ENCODE measurements at regions of chr20 and their contacts with region 1.

Region 1: DNA sequence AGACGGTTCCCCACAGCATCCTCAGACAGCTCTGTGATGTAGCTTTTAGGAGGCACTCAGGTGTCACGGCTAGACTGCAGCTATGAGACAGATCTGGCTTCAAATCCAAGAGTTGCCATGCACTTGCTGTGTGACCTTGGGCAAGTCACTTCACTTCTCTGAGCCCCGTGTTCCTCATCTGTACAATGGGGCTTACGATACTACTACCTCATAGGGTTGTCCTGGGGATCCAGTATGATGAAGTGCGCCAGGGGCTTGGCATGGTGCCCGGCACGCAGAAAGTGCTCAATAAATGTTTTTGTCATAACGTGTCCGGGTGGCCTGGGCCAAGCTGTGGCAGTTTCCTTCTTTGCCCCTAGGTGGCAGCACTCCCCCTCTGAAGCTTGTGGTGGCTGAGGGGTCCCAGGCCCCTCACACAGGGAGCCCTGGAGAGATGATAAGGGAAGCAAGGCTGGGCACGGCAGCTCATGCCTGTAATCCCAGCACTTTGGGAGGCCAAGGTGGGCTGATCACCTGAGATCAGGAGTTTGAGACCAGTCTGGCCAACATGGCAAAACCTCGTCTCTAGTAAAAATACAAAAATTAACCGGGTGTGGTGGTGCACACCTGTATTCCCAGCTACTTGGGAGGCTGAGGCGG is 19.1 kb upstream of the CHMP4B start:
- DNase-seq: peak in 1 of 2 experiments; percentile 57
- H3K4me3 ChIP-seq: no peak overlapping the region
- H3K27ac ChIP-seq: no peak overlapping the region; the same call in 1 of the 2 replicates
- H3K4me1 ChIP-seq: peaks cover 76% of the 10 kb centered on the region
- H3K27me3 ChIP-seq: no peaks in the 10 kb centered on the region
- CTCF ChIP-seq: peak; percentile 99

Region 2: DNA sequence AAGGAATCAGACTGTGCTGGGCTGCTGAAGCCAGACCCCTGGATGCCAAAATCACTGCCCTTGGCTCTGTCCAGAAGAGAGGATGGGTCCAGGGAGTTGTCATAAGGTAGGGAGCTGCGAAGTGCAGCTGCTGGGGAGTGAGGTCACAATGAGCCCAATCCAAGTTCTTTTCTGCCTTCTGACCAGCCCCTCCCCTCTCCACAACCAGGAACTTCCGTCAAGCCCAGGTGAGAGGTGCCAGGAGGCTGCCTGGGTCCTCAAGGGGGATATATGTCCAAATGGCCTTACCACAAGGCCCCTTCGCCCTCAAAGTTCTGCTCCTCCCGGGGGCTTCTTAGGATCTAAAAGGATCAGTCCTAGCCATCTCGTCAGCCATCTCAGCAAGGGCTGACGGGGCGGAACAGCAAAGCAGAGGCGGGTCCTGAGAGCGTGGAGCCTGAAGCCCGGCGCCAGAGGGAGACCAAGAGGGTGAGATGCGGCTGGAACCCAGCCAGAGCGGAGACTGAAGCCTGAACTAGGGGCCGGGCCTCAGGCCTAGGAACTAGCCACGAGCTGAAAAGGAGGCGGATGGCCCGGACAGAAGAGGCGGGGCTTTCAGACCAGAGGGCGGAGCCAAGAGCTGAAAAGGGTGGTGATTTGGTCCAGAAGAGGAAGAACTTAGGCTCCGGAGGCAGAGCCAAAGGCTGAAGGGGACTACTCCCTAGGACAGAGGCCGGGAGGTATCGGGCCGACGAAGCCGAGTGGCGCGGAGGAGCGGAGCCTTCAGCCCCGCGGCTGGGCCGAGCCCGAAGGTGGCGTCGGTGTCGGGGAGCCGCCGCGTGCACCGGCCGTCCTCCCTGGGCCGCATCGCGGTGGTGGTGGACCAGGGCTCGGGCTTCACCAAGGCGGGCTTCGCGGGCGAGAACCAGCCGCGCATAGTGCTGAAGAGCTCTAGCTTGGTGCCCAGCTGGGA is 125.5 kb before region 1 on chr20 and contains the start of gene ACTL10:
- CTCF ChIA-PET with region 1: no interaction called
- POLR2A ChIA-PET with region 1: no interaction called
- intact Hi-C with region 1: loop called (anchors 1 kb)
- DNase-seq: peak; percentile 94 to 98
- H3K4me3 ChIP-seq: peak within 1 kb of the TSS; percentile 62
- H3K27ac ChIP-seq: peak within 1 kb of the TSS; percentile 63
- H3K4me1 ChIP-seq: peaks cover 37% of the 10 kb centered on the region; the same call in 1 of the 2 replicates
- H3K27me3 ChIP-seq: no peaks in the 10 kb centered on the region
- CTCF ChIP-seq: no peak; the same call in 1 of the 2 replicates
- total RNA-seq, gene ACTL10: 0.85 and 1.0 TPM in 2 replicates

Region 3: GRCh38 chr20:33773412-33774089 is 18.5 kb before region 1 on chr20:
- CTCF ChIA-PET with region 1: no interaction called
- POLR2A ChIA-PET with region 1: interaction called, 44 read pairs
- intact Hi-C with region 1: loop called (anchors 1 kb)
- DNase-seq: no peak
- H3K4me3 ChIP-seq: no peak overlapping the region
- H3K27ac ChIP-seq: no peak overlapping the region
- H3K4me1 ChIP-seq: peaks cover 13% of the 10 kb centered on the region
- H3K27me3 ChIP-seq: no peaks in the 10 kb centered on the region
- CTCF ChIP-seq: no peak

Region 4: DNA sequence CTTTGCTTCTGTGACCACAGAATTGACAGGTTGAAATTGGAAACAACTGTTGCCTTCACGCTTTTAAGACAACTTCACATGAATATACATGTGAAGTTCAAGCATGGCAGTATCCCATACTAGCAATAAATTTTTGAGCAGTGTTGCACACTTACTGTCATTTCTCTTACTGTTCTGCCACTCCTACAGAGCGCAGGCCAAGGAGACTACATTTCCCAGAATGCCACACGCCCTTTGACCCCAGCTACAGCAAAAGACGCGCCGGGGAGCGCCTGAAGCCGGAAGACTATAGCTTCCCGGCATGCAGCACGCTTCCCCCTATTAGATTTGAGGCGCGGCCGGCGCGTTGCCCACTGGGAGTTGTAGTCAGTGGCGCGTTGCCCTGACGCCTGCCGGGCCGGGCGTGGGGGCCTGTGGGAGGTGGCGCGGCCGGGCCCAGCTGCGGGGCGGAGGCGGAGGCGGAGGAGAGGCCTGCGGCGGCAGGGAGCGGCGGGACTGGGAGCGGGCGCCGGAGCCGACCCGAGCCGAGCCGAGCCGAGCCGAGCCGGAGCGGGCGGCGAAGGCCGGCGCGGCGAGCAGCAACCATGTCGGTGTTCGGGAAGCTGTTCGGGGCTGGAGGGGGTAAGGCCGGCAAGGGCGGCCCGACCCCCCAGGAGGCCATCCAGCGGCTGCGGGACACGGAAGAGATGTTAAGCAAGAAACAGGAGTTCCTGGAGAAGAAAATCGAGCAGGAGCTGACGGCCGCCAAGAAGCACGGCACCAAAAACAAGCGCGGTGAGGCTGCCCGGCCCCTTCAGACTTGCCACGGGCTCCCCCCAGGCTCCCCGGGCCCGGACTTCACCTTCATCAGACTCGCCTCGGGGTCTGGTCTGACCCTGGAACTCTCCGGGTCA is 19.1 kb after region 1 on chr20 and contains the start of gene CHMP4B:
- CTCF ChIA-PET with region 1: interaction called, 4 read pairs
- POLR2A ChIA-PET with region 1: interaction called, 8 read pairs
- intact Hi-C with region 1: loop called (anchors 1 kb)
- DNase-seq: peak; percentile 93 to 99
- H3K4me3 ChIP-seq: peak within 1 kb of the TSS; percentile 84
- H3K27ac ChIP-seq: peak within 1 kb of the TSS; percentile 94
- H3K4me1 ChIP-seq: peaks cover 35% of the 10 kb centered on the region
- H3K27me3 ChIP-seq: no peaks in the 10 kb centered on the region
- CTCF ChIP-seq: no peak
- total RNA-seq, gene CHMP4B: 176 and 180 TPM in 2 replicates

Region 5: DNA sequence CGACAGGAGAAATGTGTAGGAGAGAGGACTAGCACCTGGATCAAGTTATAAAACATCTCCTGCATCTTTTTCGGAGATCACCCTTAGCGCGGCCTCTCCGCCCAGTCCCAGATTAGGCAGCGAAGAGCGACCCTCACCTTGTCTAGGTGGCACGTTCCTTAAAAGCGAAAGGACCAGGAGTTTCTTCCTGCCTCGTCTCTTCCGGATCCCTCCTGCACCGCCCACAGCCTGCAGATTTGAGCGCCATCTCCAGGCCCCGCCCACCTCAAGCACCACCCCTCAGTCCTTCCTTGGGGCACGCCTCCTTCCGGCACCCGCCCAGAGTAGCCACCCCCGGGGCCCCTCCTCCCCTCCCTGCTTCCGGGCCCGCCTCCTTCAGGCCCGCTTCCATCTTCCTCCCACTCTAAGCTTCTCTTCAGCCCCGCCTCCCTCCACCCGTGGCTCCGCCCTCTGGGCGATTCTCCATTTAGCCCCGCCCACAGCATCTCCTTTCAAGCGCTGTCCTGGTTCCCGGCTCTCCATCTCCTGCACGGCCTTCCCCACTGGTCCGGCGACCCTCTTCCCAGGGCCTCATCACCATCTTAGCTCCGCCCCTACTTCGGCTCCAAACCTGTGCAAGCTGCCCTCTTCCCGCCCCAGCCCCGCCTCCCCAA is 201.0 kb after region 1 on chr20:
- CTCF ChIA-PET with region 1: interaction called, 3 read pairs
- POLR2A ChIA-PET with region 1: no interaction called
- intact Hi-C with region 1: loop called (anchors 1 kb)
- DNase-seq: peak; percentile 93 to 100
- H3K4me3 ChIP-seq: peak overlapping the region; percentile 92
- H3K27ac ChIP-seq: peak overlapping the region; percentile 86
- H3K4me1 ChIP-seq: peaks cover 28% of the 10 kb centered on the region
- H3K27me3 ChIP-seq: no peaks in the 10 kb centered on the region
- CTCF ChIP-seq: no peak

Region 6: DNA sequence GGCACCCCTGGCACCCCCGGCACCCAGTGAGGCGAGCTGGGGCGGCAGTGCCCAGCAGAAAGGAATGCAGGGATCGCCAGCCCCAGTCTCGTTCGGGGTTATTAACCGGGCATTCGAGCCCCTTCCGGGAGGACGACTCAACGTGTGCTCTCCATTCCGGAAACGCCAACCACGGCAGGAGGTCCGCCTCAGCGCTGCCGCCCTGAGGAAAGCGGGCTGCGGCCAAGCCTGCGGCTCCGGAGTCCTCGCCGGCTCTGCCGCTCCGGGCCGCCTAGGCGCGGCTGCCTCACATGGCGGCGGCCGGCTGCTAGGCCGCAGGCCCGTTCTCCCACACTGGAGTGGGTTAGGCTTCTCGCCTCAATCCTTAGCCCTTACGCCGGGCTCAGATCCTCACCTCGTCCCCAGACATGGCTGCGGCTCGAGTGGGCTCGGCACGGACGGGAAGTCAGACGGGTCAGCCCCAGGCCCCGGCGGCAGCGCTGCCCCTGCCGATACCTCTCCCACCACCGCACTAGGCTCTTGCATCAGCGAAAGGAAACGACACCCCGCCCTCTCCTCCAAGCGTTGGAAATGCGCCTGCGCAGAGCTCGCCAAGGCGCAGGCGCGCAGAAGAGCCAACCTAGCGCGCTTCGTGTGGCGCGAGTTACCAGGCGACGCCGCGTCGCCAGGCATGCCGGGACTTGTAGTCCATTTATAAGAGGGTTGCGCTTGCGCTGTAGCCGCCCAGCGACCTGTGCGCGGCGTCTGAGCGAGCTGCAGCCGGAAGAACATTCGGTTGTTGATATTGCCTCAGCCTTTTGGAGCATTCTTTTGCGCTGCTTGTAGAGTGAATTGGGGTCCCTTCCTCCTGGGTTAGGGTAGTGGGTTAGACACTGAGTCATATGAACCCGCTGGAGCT is 319.9 kb after region 1 on chr20 and contains the start of gene EIF2S2:
- CTCF ChIA-PET with region 1: interaction called, 5 read pairs
- POLR2A ChIA-PET with region 1: interaction called, 3 read pairs
- intact Hi-C with region 1: loop called (anchors 5 kb)
- DNase-seq: peak; percentile 96 to 98
- H3K4me3 ChIP-seq: peak within 1 kb of the TSS; percentile 78
- H3K27ac ChIP-seq: peak within 1 kb of the TSS; percentile 92
- H3K4me1 ChIP-seq: peaks cover 27% of the 10 kb centered on the region
- H3K27me3 ChIP-seq: no peaks in the 10 kb centered on the region
- CTCF ChIP-seq: no peak
- total RNA-seq, gene EIF2S2: 129 and 162 TPM in 2 replicates